K562 (cell line): ENCODE measurements at regions of chr3 and their contacts with region 1.

Region 1: GRCh38 chr3:65170390-65171042 is 482.7 kb upstream of the ADAMTS9 start:
- DNase-seq: peak in 3 of 4 experiments; percentile 6 to 27 (median 21)
- ATAC-seq: peak; percentile 76
- H3K4me3 ChIP-seq: no peak overlapping the region
- H3K27ac ChIP-seq: no peak overlapping the region
- H3K4me1 ChIP-seq: no peaks in the 10 kb centered on the region
- H3K27me3 ChIP-seq: no peaks in the 10 kb centered on the region
- CTCF ChIP-seq: peak in 2 of 3 experiments; percentile 15 to 64; a peak in 4 of 6 replicates
- EP300 ChIP-seq: no peak
- POLR2A ChIP-seq: no peak
- RAD21 ChIP-seq: peak; percentile 59 to 71

Region 2: GRCh38 chr3:63762934-63763550 is 1407.5 kb before region 1 on chr3:
- CTCF ChIA-PET with region 1: no interaction called
- POLR2A ChIA-PET with region 1: no interaction called
- in situ Hi-C with region 1: no loop called
- intact Hi-C with region 1: no loop called
- DNase-seq: no peak
- ATAC-seq: no peak
- H3K4me3 ChIP-seq: no peak overlapping the region
- H3K27ac ChIP-seq: no peak overlapping the region
- H3K4me1 ChIP-seq: no peaks in the 10 kb centered on the region
- H3K27me3 ChIP-seq: no peaks in the 10 kb centered on the region
- CTCF ChIP-seq: no peak
- EP300 ChIP-seq: no peak
- POLR2A ChIP-seq: no peak
- RAD21 ChIP-seq: no peak

Region 3: DNA sequence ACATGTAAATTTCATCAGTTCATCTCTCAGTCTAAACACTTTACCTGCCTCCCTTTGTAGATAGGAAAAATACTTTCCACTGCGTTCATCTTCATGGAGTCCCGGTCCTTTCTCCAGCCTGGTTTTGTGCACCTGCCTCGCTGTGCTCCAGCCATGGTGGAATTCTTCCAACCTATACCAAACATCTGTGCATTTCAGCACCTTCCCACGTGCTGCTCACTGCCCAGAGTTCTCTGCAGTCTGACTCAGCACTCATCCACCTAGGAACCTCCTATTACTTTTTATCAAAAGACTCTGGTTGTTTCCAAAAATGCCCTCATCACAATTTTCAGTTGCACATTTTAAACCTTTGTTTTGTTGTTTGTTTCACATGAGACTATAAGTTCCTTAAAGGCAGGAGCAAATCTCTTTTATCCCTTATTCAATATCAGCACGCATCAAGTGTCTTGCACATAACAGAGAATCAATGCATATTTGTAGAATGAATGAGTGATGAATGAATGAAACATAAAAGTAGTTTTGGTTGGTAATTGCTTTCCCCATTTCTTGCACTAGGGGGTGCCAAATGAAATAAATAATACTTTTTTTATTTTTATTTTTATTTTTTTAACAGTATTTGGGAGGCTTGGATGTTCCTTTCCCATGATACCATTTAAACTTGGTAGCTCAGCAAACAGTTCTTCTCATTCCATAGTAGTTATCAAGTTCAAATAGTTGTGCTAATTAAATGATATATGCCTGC is 452.5 kb before region 1 on chr3:
- CTCF ChIA-PET with region 1: interaction called, 6 read pairs
- POLR2A ChIA-PET with region 1: no interaction called
- in situ Hi-C with region 1: no loop called
- intact Hi-C with region 1: loop called (anchors 10 kb)
- DNase-seq: peak in 2 of 4 experiments; percentile 6
- ATAC-seq: no peak
- H3K4me3 ChIP-seq: no peak overlapping the region
- H3K27ac ChIP-seq: no peak overlapping the region
- H3K4me1 ChIP-seq: no peaks in the 10 kb centered on the region
- H3K27me3 ChIP-seq: no peaks in the 10 kb centered on the region
- CTCF ChIP-seq: peak in 1 of 3 experiments; percentile 50; a peak in 2 of 6 replicates
- EP300 ChIP-seq: no peak
- POLR2A ChIP-seq: no peak
- RAD21 ChIP-seq: peak; percentile 17 to 42; a peak in 3 of 4 replicates

Region 4: GRCh38 chr3:65094723-65095122 is 75.8 kb before region 1 on chr3:
- CTCF ChIA-PET with region 1: no interaction called
- POLR2A ChIA-PET with region 1: no interaction called
- in situ Hi-C with region 1: no loop called
- intact Hi-C with region 1: no loop called
- DNase-seq: no peak
- ATAC-seq: no peak
- H3K4me3 ChIP-seq: no peak overlapping the region
- H3K27ac ChIP-seq: no peak overlapping the region
- H3K4me1 ChIP-seq: no peaks in the 10 kb centered on the region
- H3K27me3 ChIP-seq: no peaks in the 10 kb centered on the region
- CTCF ChIP-seq: no peak
- EP300 ChIP-seq: no peak
- POLR2A ChIP-seq: no peak
- RAD21 ChIP-seq: no peak